Activated B cell treated with CpG ODN at 0.5 μM for 24 hours (primary cell): ENCODE measurements at regions of chr5 and their contacts with region 1.

Region 1: DNA sequence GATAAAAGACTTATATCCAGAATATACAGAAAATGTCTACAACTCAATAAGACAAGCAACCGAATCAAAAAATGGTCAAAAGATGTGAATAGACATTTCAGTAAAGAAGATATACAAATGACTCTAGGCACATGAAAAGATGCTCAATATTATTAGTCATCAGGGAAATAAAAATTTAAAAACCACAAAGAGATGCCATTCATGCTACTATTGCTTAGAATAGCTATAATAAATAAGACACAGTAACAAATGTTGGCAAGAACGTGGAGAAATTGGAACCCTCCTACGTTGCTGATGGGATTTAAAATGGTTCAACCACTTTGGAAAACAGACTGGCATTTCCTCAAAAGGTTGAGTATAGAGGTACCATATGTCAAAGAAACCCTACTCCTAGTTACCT is 39.8 kb downstream of the POLK start:
- DNase-seq: no peak
- ATAC-seq: no peak
- H3K4me3 Mint-ChIP-seq: no peak overlapping the region
- H3K27ac Mint-ChIP-seq: no peak overlapping the region
- H3K4me1 Mint-ChIP-seq: peaks cover 13% of the 10 kb centered on the region
- H3K27me3 Mint-ChIP-seq: no peaks in the 10 kb centered on the region
- CTCF ChIP-seq: no peak

Region 2: DNA sequence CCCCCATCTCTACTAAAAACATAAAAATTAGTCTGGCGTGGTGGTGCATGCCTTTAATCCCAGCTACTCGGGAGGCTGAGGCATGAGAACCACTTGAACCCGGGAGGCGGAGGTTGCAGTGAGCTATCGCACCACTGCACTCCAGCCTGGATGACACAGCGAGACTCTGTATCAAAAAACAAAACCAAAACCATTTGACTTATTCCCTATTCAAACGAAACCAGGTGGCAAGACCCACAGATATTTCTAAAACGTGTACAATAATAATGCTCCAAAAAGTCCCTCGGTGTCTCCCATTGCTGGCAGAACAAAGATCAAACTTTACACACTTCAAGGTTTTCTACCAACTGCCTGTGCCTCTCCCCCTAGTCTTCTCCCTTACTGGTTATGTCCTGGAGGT is 184.7 kb before region 1 on chr5:
- CTCF ChIA-PET with region 1: no interaction called
- POLR2A ChIA-PET with region 1: no interaction called
- intact Hi-C with region 1: no loop called
- DNase-seq: no peak
- ATAC-seq: peak; percentile 37
- H3K4me3 Mint-ChIP-seq: no peak overlapping the region
- H3K27ac Mint-ChIP-seq: peak overlapping the region; percentile 62
- H3K4me1 Mint-ChIP-seq: peaks cover 4% of the 10 kb centered on the region
- H3K27me3 Mint-ChIP-seq: no peaks in the 10 kb centered on the region
- CTCF ChIP-seq: no peak

Region 3: DNA sequence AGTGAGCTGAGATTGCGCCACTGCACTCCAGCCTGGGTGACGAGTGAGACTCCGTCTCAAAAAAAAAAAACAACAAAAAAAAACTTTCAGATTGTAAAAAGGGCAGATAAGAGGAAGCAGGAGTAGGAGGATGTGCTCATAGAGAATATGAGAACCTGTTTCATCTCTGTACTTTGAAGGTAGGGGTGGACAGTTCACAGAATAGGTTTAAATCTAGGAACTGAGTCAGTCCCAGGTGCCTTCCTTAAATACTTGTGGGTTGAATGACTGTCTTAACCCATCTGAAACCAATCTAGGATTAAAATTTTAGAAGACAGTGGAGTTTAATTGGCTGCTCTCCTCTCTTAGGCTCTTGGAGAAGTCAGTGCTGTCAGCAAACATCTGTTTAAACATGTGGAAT is 27.4 kb before region 1 on chr5:
- CTCF ChIA-PET with region 1: no interaction called
- POLR2A ChIA-PET with region 1: no interaction called
- intact Hi-C with region 1: loop called (anchors 2 kb)
- DNase-seq: no peak
- ATAC-seq: peak; percentile 80
- H3K4me3 Mint-ChIP-seq: peak overlapping the region; percentile 58
- H3K27ac Mint-ChIP-seq: peak overlapping the region; percentile 76
- H3K4me1 Mint-ChIP-seq: peaks cover 43% of the 10 kb centered on the region
- H3K27me3 Mint-ChIP-seq: no peaks in the 10 kb centered on the region
- CTCF ChIP-seq: no peak

Region 4: DNA sequence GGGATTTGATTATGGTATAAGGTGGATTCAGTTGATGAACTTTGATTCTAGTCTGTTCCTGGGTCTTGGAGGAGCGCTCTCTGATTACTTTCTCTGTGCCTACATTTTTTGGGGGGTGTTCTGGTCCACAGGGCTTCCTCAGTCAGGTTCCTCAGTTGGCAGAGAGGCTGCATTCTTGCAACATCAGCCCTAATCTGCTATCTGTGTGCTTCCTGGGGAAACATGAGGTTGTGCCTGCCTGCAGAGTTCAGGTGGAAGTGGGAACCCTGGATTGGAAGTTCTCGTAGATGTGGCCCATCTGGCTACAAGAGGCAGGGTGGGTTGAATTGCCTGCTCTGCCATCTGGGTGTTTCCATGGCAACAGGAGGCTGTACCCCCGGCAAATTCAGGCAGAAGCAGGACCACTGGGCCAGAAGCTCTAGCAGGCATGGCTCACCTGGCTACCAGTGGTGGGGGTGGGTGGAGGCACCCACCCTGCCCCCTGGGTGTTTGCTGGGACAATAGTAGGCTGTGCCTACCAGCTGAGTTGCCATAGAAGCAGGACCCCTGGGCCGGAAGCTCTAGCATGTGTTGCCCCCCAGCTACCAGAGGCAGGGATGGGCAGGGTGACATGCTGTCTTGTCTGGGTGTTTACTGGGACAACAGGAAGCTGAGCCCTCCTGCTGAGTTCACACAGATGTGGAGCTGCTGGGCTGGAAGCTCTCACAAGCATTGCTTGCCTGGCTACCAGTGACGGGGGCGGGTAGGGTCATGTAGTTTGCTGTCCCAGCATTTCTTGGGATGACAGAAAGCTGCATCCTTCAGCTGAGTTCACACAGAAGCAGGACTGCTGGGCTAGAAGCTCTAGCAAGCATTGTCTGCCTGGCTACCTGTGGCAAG is 15.1 kb before region 1 on chr5:
- CTCF ChIA-PET with region 1: no interaction called
- POLR2A ChIA-PET with region 1: no interaction called
- intact Hi-C with region 1: no loop called
- DNase-seq: no peak
- ATAC-seq: no peak
- H3K4me3 Mint-ChIP-seq: no peak overlapping the region
- H3K27ac Mint-ChIP-seq: no peak overlapping the region
- H3K4me1 Mint-ChIP-seq: peaks cover 21% of the 10 kb centered on the region
- H3K27me3 Mint-ChIP-seq: no peaks in the 10 kb centered on the region
- CTCF ChIP-seq: no peak

Region 5: DNA sequence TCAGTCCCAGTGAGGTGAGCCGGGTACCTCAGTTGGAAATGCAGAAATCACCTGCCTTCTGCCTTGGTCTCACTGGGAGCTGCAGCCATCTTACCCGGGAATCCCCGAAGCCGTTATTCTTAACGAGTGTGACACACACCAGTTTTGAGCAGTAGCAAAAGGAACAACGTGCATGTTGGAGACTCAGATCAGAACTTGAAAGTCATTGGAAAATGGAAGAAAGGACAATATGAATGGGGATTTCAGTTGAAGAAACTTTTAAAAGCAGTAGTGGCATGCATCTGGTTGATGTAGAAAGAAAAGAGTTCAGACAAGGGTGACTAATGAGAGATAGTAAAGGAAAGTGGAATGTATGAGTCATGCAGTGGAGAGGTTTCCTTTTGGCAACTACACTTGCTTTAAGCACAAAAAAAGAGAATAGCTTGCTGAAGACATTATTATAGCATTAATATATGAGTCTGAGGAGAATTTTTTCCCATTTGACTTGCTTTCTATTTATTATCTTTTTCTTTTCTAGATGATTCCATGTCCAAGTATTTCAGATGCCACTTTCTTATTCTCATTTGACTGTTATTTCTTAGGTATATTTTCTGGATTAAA is 15.3 kb after region 1 on chr5:
- CTCF ChIA-PET with region 1: no interaction called
- POLR2A ChIA-PET with region 1: interaction called, 4 read pairs
- intact Hi-C with region 1: loop called (anchors 2 kb)
- DNase-seq: no peak
- ATAC-seq: peak; percentile 83
- H3K4me3 Mint-ChIP-seq: peak overlapping the region; percentile 76
- H3K27ac Mint-ChIP-seq: peak overlapping the region; percentile 88
- H3K4me1 Mint-ChIP-seq: peaks cover 46% of the 10 kb centered on the region
- H3K27me3 Mint-ChIP-seq: no peaks in the 10 kb centered on the region
- CTCF ChIP-seq: no peak

Region 6: DNA sequence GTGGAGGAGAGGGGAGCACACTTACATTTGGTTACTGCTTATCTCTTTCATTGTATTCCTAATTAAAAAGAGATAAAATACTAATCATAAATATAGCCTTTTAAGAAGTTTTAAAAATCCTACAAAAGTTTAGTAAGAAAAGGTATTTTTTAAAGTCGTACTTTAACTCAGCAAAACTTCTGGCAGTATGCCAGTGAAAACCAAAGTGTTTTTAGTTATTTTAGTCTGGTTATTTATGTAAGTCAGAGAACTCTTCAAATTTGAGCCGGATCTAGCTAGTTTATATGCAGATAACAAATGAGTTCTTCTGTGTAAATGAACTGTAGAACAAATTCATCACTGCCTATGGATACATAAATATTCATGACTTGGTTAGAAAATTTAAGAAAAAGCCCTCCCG is 23.3 kb after region 1 on chr5:
- CTCF ChIA-PET with region 1: no interaction called
- POLR2A ChIA-PET with region 1: no interaction called
- intact Hi-C with region 1: loop called (anchors 2 kb)
- DNase-seq: no peak
- ATAC-seq: no peak
- H3K4me3 Mint-ChIP-seq: peak overlapping the region; percentile 76
- H3K27ac Mint-ChIP-seq: peak overlapping the region; percentile 86
- H3K4me1 Mint-ChIP-seq: peaks cover 37% of the 10 kb centered on the region
- H3K27me3 Mint-ChIP-seq: no peaks in the 10 kb centered on the region
- CTCF ChIP-seq: no peak

Region 7: DNA sequence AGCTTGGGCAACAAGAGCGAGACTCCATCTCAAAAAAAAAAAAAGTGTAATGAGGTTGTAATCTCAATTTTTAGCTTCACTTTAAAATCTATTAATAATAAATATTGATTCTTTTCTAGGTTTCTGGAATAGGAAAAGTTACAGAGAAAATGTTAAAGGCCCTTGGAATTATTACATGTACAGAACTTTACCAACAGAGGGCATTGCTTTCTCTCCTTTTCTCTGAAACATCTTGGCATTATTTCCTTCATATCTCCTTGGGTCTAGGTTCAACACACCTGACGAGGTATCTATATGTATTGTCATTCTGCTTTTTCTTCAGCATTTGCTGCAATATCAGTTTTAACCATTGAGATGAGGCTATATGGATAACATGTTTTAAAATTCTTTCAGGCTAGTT is 33.2 kb after region 1 on chr5:
- CTCF ChIA-PET with region 1: no interaction called
- POLR2A ChIA-PET with region 1: no interaction called
- intact Hi-C with region 1: loop called (anchors 5 kb)
- DNase-seq: no peak
- ATAC-seq: no peak
- H3K4me3 Mint-ChIP-seq: no peak overlapping the region
- H3K27ac Mint-ChIP-seq: no peak overlapping the region
- H3K4me1 Mint-ChIP-seq: no peaks in the 10 kb centered on the region
- H3K27me3 Mint-ChIP-seq: no peaks in the 10 kb centered on the region
- CTCF ChIP-seq: no peak

Region 8: GRCh38 chr5:75933491-75933890 is 382.0 kb after region 1 on chr5:
- CTCF ChIA-PET with region 1: no interaction called
- POLR2A ChIA-PET with region 1: no interaction called
- intact Hi-C with region 1: no loop called
- DNase-seq: no peak
- ATAC-seq: no peak
- H3K4me3 Mint-ChIP-seq: no peak overlapping the region
- H3K27ac Mint-ChIP-seq: no peak overlapping the region
- H3K4me1 Mint-ChIP-seq: no peaks in the 10 kb centered on the region
- H3K27me3 Mint-ChIP-seq: peaks cover 6% of the 10 kb centered on the region
- CTCF ChIP-seq: no peak